MCF 10A (cell line): ENCODE measurements at regions of chr16 and their contacts with region 1.

Region 1: GRCh38 chr16:17457513-17457912 is 13.2 kb downstream of the XYLT1 start:
- DNase-seq: no peak
- H3K4me3 Mint-ChIP-seq: no peak overlapping the region
- H3K27ac Mint-ChIP-seq: no peak overlapping the region
- H3K4me1 Mint-ChIP-seq: no peaks in the 10 kb centered on the region
- H3K27me3 Mint-ChIP-seq: no peaks in the 10 kb centered on the region
- CTCF ChIP-seq: no peak

Region 2: DNA sequence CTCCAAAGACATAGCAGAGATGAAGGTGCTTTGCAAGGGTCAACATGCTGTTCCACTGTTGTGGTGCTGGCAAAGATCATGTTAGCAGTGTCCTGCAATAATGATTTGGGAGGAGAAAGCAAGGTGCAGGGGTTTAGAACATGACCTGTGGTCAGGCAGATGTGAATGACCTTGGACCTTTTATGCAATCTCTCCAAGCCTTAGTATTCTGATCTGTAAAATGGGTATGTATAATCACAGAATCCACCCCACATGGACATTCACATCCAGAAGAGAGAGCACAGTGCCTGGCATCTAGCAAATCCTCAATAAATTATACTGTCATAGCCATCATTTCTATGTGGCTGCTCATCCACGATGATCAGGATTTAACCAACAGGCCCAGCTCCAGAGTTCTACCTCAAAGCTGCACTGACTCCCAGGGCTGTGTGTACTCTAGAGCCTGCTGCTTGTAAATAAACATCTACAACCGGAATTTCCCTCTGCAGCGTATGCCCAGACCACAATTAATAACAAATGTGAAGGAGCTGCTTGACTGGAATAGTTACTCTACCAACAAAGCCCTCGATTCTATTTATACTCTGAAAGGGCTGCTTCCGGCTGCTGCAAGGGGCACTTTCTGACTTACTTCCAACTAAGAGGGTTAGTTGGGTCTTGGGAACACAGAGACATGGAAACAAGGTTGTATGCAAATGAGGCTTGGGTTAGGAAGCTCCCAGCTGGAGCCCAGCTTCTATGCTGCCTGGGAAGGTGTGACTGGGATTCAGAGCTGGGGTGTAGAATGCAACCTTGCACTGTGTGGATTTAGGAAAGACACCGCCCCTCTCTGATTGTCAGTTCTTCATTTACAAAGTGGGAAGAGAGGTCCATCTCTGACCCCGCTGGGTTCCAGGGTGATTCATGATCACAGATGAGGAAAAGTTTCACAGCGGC is 252.0 kb before region 1 on chr16:
- CTCF ChIA-PET with region 1: interaction called, 10 read pairs
- POLR2A ChIA-PET with region 1: no interaction called
- intact Hi-C with region 1: no loop called
- DNase-seq: no peak
- H3K4me3 Mint-ChIP-seq: no peak overlapping the region
- H3K27ac Mint-ChIP-seq: no peak overlapping the region
- H3K4me1 Mint-ChIP-seq: no peaks in the 10 kb centered on the region
- H3K27me3 Mint-ChIP-seq: no peaks in the 10 kb centered on the region
- CTCF ChIP-seq: no peak